Body of pancreas (tissue), 4 donors: ENCODE measurements at regions of chr11 and their contacts with region 1.

Region 1: GRCh38 chr11:61632096-61632495 is 48.1 kb upstream of the DAGLA start:
- DNase-seq: no peak
- ATAC-seq: no peak
- H3K4me3 ChIP-seq: no peak overlapping the region
- H3K27ac ChIP-seq: no peak overlapping the region
- H3K4me1 ChIP-seq: peaks cover 15% of the 10 kb centered on the region
- H3K27me3 ChIP-seq: no peaks in the 10 kb centered on the region
- CTCF ChIP-seq: no peak
- POLR2A ChIP-seq: no peak

Region 2: GRCh38 chr11:61587521-61588453 is 44.3 kb before region 1 on chr11:
- intact Hi-C with region 1: loop called (anchors 5 kb)
- DNase-seq: peak; percentile 67 to 80 (median 72)
- ATAC-seq: peak; percentile 66
- H3K4me3 ChIP-seq: peak overlapping the region in 1 of 2 donors; percentile 4
- H3K27ac ChIP-seq: peak overlapping the region; percentile 5 to 54 (median 24)
- H3K4me1 ChIP-seq: peaks cover 20% of the 10 kb centered on the region
- H3K27me3 ChIP-seq: no peaks in the 10 kb centered on the region
- CTCF ChIP-seq: peak in 5 of 7 experiments; percentile 14 to 35 (median 28)
- POLR2A ChIP-seq: no peak

Region 3: DNA sequence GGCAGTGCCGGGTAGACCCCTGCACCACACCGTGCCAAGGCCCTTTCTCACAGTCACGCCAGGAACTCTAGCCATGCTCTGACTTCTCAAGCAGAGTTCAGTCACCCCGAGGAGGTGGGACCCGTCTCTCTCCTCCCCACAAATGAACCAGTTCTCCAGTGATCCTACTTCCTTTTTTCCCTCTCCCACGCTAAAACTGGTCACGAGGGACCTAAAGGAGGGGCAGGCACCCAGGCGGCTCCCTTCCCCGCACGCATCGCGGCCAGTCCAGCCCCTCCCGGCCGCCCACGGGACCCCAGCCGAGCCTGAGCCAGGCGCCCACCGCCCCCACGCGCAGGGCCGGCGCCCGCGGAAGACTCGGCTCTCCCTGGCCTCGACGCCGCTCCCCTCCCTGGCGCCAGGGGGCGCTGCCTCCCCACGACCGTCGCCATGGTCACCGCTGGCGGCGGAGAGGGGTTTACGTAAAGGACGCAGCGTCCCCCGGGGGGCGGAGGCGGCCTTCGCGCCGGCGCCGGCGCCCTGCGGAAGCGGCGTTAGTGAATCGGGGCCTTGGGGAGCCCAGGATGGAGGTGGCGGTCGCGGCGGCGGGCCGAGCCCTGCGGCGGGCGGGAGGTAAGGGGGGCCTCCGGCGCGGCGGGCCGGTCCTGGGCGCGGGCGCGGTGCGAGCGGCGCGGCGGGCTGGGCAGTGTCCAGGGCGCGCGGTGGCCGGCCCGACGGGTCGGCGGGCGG is 48.0 kb after region 1 on chr11 and contains the start of gene DAGLA:
- intact Hi-C with region 1: no loop called
- DNase-seq: peak; percentile 74 to 86 (median 82)
- ATAC-seq: peak; percentile 87
- H3K4me3 ChIP-seq: peak within 1 kb of the TSS in 1 of 2 donors; percentile 26
- H3K27ac ChIP-seq: peak within 1 kb of the TSS; percentile 21 to 72 (median 43)
- H3K4me1 ChIP-seq: peaks cover 47% of the 10 kb centered on the region
- H3K27me3 ChIP-seq: no peaks in the 10 kb centered on the region
- CTCF ChIP-seq: peak; percentile 68 to 100 (median 99)
- POLR2A ChIP-seq: no peak
- total RNA-seq, gene DAGLA: 7.0 to 9.9 TPM

Region 4: DNA sequence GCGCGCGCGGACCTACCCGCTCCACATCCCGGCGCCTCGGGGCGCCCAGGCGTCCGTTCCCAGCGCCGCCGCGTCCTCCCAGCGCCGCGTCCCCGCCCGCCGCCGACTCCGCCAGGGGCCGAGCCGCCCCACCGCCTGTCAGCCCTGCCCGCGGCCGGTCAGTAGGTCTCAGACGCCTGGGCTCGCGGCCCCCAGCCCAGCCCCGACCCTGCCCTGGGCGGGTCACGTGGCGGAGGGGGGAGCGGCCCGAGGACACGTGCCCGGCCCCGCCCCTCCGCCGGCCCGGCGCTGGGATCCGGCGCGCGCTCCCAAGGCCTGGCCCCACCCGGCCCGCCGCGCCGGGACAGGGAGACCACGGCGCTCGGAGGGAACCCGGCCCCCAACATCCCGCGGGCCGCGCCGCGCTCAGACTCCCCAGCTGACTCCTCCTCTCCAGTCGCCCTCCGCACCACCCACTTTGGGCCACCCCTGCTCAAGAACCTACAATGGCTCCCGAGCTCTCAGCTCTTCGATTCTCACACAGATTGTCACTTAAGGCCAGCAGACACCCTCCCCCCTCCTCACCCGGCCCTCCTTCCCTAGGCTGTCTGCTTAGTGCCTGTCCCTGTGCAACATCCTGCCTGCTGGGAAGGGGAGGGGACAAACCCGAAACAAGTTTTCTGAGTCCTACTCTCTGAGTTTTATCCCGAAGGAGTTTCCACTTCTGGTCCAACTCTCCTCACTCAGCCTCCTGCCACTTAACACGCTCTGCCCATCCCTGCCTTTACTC is 285.4 kb after region 1 on chr11 and contains the start of gene RAB3IL1:
- intact Hi-C with region 1: no loop called
- DNase-seq: peak in 3 of 4 donors; percentile 46 to 66 (median 55)
- ATAC-seq: peak; percentile 80
- H3K4me3 ChIP-seq: no peak within 1 kb of the TSS
- H3K27ac ChIP-seq: peak within 1 kb of the TSS in 2 of 4 donors; percentile 21 to 37
- H3K4me1 ChIP-seq: peaks cover 7% of the 10 kb centered on the region
- H3K27me3 ChIP-seq: no peaks in the 10 kb centered on the region
- CTCF ChIP-seq: no peak
- POLR2A ChIP-seq: peak in 1 of 3 donors; percentile 31
- total RNA-seq, gene RAB3IL1: 5.4 to 11.5 TPM

Region 5: DNA sequence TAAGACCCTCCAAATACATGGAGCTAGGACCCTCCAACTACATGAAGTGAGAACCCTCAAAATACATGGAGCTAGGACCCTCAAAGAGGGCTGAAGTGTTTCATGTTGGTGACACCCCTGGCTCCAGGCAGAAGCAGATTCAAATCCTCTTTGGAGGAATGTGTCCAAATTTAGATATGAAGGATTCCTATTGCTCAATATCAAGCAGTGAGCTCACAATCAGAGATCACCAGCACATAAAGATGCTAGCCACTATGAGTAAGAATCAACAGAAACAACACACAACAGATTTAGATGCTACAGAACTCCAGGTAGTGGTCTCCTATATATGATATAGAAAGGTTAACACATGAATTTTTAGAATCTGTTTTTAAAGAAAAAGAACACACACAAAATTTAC is 296.5 kb after region 1 on chr11:
- intact Hi-C with region 1: no loop called
- DNase-seq: no peak
- ATAC-seq: no peak
- H3K4me3 ChIP-seq: no peak overlapping the region
- H3K27ac ChIP-seq: no peak overlapping the region
- H3K4me1 ChIP-seq: peaks cover 3% of the 10 kb centered on the region
- H3K27me3 ChIP-seq: no peaks in the 10 kb centered on the region
- CTCF ChIP-seq: no peak
- POLR2A ChIP-seq: no peak